MCF 10A (cell line): ENCODE measurements at regions of chr5 and their contacts with region 1.

Region 1: GRCh38 chr5:163564321-163564938 is 59.0 kb downstream of the MAT2B start:
- DNase-seq: peak; percentile 85
- H3K4me3 Mint-ChIP-seq: no peak overlapping the region
- H3K27ac Mint-ChIP-seq: no peak overlapping the region
- H3K4me1 Mint-ChIP-seq: peaks cover 37% of the 10 kb centered on the region
- H3K27me3 Mint-ChIP-seq: no peaks in the 10 kb centered on the region
- CTCF ChIP-seq: peak; percentile 87

Region 2: GRCh38 chr5:162334944-162335343 is 1229.5 kb before region 1 on chr5:
- CTCF ChIA-PET with region 1: no interaction called
- POLR2A ChIA-PET with region 1: no interaction called
- intact Hi-C with region 1: no loop called
- DNase-seq: no peak
- H3K4me3 Mint-ChIP-seq: no peak overlapping the region
- H3K27ac Mint-ChIP-seq: no peak overlapping the region
- H3K4me1 Mint-ChIP-seq: no peaks in the 10 kb centered on the region
- H3K27me3 Mint-ChIP-seq: no peaks in the 10 kb centered on the region
- CTCF ChIP-seq: no peak

Region 3: DNA sequence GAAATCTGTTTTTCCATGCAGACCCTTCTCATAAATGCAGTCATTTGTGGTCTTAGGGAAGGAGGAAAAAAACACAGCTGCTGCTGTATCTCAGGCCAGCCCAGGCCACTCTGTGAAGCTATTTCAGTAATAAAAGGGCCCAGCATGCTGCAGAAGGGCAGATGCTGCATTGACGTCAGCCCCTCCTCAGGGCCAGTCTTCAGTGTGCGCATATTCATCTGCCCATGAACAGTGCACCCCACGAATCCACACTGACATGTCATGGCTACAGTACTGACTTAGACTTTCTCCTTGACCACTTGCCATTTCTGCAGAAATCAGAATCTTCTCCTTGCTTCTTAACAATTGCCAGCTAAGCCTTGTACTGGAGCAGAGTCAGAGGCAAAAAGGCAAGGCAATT is 1192.2 kb before region 1 on chr5:
- CTCF ChIA-PET with region 1: no interaction called
- POLR2A ChIA-PET with region 1: no interaction called
- intact Hi-C with region 1: no loop called
- DNase-seq: no peak
- H3K4me3 Mint-ChIP-seq: no peak overlapping the region
- H3K27ac Mint-ChIP-seq: no peak overlapping the region
- H3K4me1 Mint-ChIP-seq: no peaks in the 10 kb centered on the region
- H3K27me3 Mint-ChIP-seq: no peaks in the 10 kb centered on the region
- CTCF ChIP-seq: no peak

Region 4: GRCh38 chr5:163318707-163319106 is 245.7 kb before region 1 on chr5:
- CTCF ChIA-PET with region 1: no interaction called
- POLR2A ChIA-PET with region 1: no interaction called
- intact Hi-C with region 1: no loop called
- DNase-seq: no peak
- H3K4me3 Mint-ChIP-seq: no peak overlapping the region
- H3K27ac Mint-ChIP-seq: no peak overlapping the region
- H3K4me1 Mint-ChIP-seq: no peaks in the 10 kb centered on the region
- H3K27me3 Mint-ChIP-seq: no peaks in the 10 kb centered on the region
- CTCF ChIP-seq: no peak

Region 5: GRCh38 chr5:163552536-163552935 is 11.9 kb before region 1 on chr5:
- CTCF ChIA-PET with region 1: interaction called, 11 read pairs
- POLR2A ChIA-PET with region 1: no interaction called
- intact Hi-C with region 1: no loop called
- DNase-seq: no peak
- H3K4me3 Mint-ChIP-seq: no peak overlapping the region
- H3K27ac Mint-ChIP-seq: no peak overlapping the region
- H3K4me1 Mint-ChIP-seq: no peaks in the 10 kb centered on the region
- H3K27me3 Mint-ChIP-seq: no peaks in the 10 kb centered on the region
- CTCF ChIP-seq: no peak

Region 6: GRCh38 chr5:163604013-163604412 is 39.6 kb after region 1 on chr5:
- CTCF ChIA-PET with region 1: no interaction called
- POLR2A ChIA-PET with region 1: no interaction called
- intact Hi-C with region 1: no loop called
- DNase-seq: no peak
- H3K4me3 Mint-ChIP-seq: no peak overlapping the region
- H3K27ac Mint-ChIP-seq: no peak overlapping the region
- H3K4me1 Mint-ChIP-seq: no peaks in the 10 kb centered on the region
- H3K27me3 Mint-ChIP-seq: no peaks in the 10 kb centered on the region
- CTCF ChIP-seq: no peak

Region 7: GRCh38 chr5:163687414-163687813 is 123.0 kb after region 1 on chr5:
- CTCF ChIA-PET with region 1: interaction called, 86 read pairs
- POLR2A ChIA-PET with region 1: no interaction called
- intact Hi-C with region 1: no loop called
- DNase-seq: no peak
- H3K4me3 Mint-ChIP-seq: no peak overlapping the region
- H3K27ac Mint-ChIP-seq: no peak overlapping the region
- H3K4me1 Mint-ChIP-seq: peaks cover 3% of the 10 kb centered on the region
- H3K27me3 Mint-ChIP-seq: no peaks in the 10 kb centered on the region
- CTCF ChIP-seq: no peak

Region 8: DNA sequence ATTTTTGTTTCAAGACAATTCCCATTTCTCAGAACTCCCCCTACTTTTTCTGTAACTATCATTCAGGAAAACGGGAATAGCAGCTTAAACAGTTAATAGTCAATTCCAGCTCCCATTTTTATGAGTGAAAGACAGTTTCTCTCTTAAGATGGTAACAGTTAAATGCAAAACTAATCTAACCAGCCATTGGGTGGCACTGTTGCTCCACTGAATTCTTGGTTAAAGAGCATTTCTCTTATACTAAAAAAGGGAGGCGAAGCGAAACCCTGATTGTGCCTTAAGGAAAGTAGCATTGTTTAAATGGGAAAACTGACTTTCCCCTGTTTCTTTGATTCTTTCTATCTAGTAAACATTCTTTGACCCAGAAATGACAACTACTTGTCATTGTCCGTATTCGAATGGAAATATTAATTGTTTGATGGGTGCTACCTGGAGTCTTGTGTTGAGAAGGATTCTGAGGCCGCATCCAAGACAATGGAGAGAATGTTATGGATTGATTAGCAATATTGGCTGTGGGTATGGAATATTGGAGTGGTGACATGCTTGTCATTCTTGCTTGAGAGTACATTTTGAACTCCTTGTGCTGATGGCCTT is 448.7 kb after region 1 on chr5:
- CTCF ChIA-PET with region 1: interaction called, 7 read pairs
- POLR2A ChIA-PET with region 1: interaction called, 5 read pairs
- intact Hi-C with region 1: loop called (anchors 1 kb)
- DNase-seq: peak; percentile 91
- H3K4me3 Mint-ChIP-seq: no peak overlapping the region
- H3K27ac Mint-ChIP-seq: no peak overlapping the region
- H3K4me1 Mint-ChIP-seq: no peaks in the 10 kb centered on the region
- H3K27me3 Mint-ChIP-seq: no peaks in the 10 kb centered on the region
- CTCF ChIP-seq: peak; percentile 80

Region 9: GRCh38 chr5:164475339-164475977 is 911.0 kb after region 1 on chr5:
- CTCF ChIA-PET with region 1: interaction called, 14 read pairs
- POLR2A ChIA-PET with region 1: no interaction called
- intact Hi-C with region 1: loop called (anchors 2 kb)
- DNase-seq: peak; percentile 70
- H3K4me3 Mint-ChIP-seq: no peak overlapping the region
- H3K27ac Mint-ChIP-seq: no peak overlapping the region
- H3K4me1 Mint-ChIP-seq: no peaks in the 10 kb centered on the region
- H3K27me3 Mint-ChIP-seq: no peaks in the 10 kb centered on the region
- CTCF ChIP-seq: peak; percentile 97

Region 10: DNA sequence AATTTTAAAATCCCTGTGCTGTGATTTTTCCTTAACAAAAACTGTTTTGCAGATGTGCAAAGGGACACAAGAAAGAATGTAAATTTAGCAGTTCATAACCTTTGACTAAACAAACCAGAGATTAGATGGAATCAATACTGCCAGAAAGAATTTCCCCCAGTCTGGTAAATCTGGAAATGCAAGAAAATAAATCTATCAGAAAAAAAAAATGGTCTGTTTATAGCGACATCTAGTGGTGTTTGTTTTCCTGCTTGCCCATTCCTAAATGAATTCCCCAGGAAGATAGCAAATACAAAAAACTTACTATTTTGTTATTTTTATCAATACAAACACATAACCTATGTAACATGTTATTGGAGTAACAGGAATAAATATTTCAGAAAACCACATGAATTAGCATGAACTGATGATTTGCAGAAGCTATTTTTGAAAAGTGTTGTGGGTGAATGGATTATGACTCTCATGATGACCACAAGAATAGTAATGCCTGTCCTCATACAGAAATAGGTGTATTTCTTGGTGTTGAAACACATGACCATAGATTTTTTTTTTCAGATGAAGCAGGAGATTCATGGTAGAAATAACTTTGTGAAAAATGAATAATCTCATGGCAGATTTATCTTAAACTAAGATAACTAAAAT is 1644.8 kb after region 1 on chr5:
- CTCF ChIA-PET with region 1: interaction called, 4 read pairs
- POLR2A ChIA-PET with region 1: no interaction called
- intact Hi-C with region 1: loop called (anchors 2 kb)
- DNase-seq: peak; percentile 55
- H3K4me3 Mint-ChIP-seq: no peak overlapping the region
- H3K27ac Mint-ChIP-seq: no peak overlapping the region
- H3K4me1 Mint-ChIP-seq: no peaks in the 10 kb centered on the region
- H3K27me3 Mint-ChIP-seq: no peaks in the 10 kb centered on the region
- CTCF ChIP-seq: peak; percentile 66